ENCODE measurements at regions of chr14 and their contacts with region 1.

Region 1: DNA sequence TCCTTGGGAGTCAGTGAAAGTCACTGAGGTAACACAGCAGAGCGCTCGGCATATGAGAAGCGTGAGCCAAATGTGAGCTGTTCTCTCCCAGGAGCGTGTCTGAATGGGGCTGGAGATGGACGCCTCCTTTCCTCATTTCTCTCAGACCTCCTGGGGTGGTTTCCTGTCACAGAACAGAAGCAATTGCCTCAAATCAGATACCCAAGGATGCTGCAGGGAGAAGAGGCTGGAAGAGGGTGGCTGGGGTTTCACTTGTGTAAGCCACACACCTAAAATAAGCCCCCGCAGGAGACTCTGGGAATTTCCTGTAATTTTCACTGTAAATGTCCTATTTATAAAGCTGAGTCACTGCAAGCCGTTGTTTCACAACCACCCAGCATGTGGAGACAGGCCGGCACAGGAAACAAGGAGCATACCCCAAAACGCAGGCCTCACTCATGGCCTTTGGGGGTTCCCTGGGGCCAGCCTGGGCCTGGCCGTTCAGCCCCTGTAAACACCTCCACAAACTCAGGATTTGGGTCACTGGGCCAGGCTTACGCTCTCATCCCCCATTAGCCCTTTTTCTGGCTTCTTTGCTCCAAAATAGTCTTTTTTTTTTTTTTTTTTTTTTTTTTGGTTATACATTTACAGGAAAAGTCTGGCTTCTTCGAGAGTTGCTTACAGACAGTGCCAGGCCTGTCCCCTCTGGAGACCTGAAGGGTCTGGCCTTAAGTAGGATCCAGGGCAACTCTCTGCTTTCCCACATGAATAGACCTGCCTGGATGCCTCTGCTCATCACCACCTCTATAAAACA is 55.3 kb downstream of the VCPKMT start:
- DNase-seq: peak in 3 of 5 donors; percentile 15 to 76 (median 22)
- H3K4me3 ChIP-seq: peak overlapping the region in 1 of 2 donors; percentile 62
- H3K4me3 Mint-ChIP-seq: peak overlapping the region in 7 of 8 donors; percentile 87 to 98 (median 94)
- H3K27ac ChIP-seq: peak overlapping the region; percentile 83
- H3K27ac Mint-ChIP-seq: peak overlapping the region; percentile 92 to 100 (median 99)
- H3K4me1 ChIP-seq: peaks cover 82% of the 10 kb centered on the region
- H3K4me1 Mint-ChIP-seq: peaks cover 59 to 95% (median 78%) of the 10 kb centered on the region in 4 donors
- H3K27me3 ChIP-seq: no peaks in the 10 kb centered on the region
- H3K27me3 Mint-ChIP-seq: no peaks in the 10 kb centered on the region

Region 2: GRCh38 chr14:49585803-49586672 is 475.0 kb before region 1 on chr14 and contains the start of gene RPS29:
- CTCF ChIA-PET with region 1: no interaction called
- POLR2A ChIA-PET with region 1: no interaction called
- intact Hi-C with region 1: loop called (anchors 1 kb)
- DNase-seq: peak; percentile 98 to 99 (median 99)
- H3K4me3 ChIP-seq: peak within 1 kb of the TSS; percentile 93 to 98
- H3K4me3 Mint-ChIP-seq: peak within 1 kb of the TSS; percentile 87 to 98 (median 95)
- H3K27ac ChIP-seq: peak within 1 kb of the TSS; percentile 95
- H3K27ac Mint-ChIP-seq: peak within 1 kb of the TSS; percentile 88 to 100 (median 99)
- H3K4me1 ChIP-seq: peaks cover 38% of the 10 kb centered on the region
- H3K4me1 Mint-ChIP-seq: peaks cover 29 to 62% (median 42%) of the 10 kb centered on the region in 4 donors
- H3K27me3 ChIP-seq: no peaks in the 10 kb centered on the region
- H3K27me3 Mint-ChIP-seq: peaks cover 0 to 4% of the 10 kb centered on the region in 2 donors
- total RNA-seq, gene RPS29: 3,602 to 3,749 TPM

Region 3: GRCh38 chr14:49908432-49908781 is 152.7 kb before region 1 on chr14:
- CTCF ChIA-PET with region 1: no interaction called
- POLR2A ChIA-PET with region 1: interaction called, 11 read pairs
- intact Hi-C with region 1: no loop called
- DNase-seq: no peak
- H3K4me3 ChIP-seq: no peak overlapping the region
- H3K4me3 Mint-ChIP-seq: peak overlapping the region in 1 of 8 donors; percentile 39
- H3K27ac ChIP-seq: no peak overlapping the region
- H3K27ac Mint-ChIP-seq: peak overlapping the region in 2 of 7 donors; percentile 8 to 70
- H3K4me1 ChIP-seq: peaks cover 38% of the 10 kb centered on the region
- H3K4me1 Mint-ChIP-seq: peaks cover 18 to 42% (median 32%) of the 10 kb centered on the region in 4 donors
- H3K27me3 ChIP-seq: no peaks in the 10 kb centered on the region
- H3K27me3 Mint-ChIP-seq: no peaks in the 10 kb centered on the region

Region 4: GRCh38 chr14:49977126-49977841 is 83.8 kb before region 1 on chr14:
- CTCF ChIA-PET with region 1: interaction called, 29 read pairs
- POLR2A ChIA-PET with region 1: interaction called, 108 read pairs
- intact Hi-C with region 1: no loop called
- DNase-seq: peak; percentile 48 to 66 (median 61)
- H3K4me3 ChIP-seq: peak overlapping the region; percentile 50 to 53
- H3K4me3 Mint-ChIP-seq: peak overlapping the region; percentile 75 to 89 (median 84)
- H3K27ac ChIP-seq: peak overlapping the region; percentile 48
- H3K27ac Mint-ChIP-seq: peak overlapping the region; percentile 91 to 95 (median 93)
- H3K4me1 ChIP-seq: peaks cover 100% of the 10 kb centered on the region
- H3K4me1 Mint-ChIP-seq: peaks cover 60 to 96% (median 87%) of the 10 kb centered on the region in 4 donors
- H3K27me3 ChIP-seq: no peaks in the 10 kb centered on the region
- H3K27me3 Mint-ChIP-seq: no peaks in the 10 kb centered on the region

Region 5: DNA sequence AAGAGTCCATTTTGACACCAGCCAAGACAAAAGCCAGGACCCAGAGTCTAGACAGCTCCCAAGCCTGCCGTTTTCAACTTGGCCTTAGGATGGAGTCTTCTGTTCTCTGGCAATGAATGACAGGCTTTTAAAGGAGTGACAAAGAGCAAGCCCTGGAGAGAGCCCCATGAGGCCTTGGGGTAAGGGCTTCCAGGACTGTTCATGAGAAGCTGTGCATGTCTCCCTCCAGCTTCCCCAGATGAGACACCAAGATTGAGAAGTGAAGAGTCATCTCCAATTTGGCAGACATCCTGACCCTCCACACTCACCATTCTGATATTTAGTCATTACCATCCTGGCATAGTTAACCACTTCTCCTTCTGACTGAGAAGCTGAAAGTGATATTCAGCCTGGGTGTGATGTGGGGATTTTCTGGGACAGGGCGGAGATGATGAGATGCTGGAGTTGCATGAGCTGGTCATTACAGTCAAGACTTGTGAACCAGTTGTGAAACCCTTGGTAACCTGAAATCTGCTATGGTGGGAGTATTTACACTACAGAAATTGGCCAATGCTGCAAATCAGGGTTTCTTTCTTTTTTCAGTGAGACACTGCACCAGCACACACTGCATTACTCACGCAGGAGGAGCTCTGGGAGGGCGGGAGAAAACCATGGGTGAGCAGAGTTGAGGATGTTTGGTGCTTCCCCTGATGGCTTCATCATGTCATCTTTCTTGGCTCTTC is 22.5 kb before region 1 on chr14:
- CTCF ChIA-PET with region 1: interaction called, 45 read pairs
- POLR2A ChIA-PET with region 1: interaction called, 194 read pairs
- intact Hi-C with region 1: loop called (anchors 1 kb)
- DNase-seq: peak in 2 of 5 donors; percentile 10 to 63
- H3K4me3 ChIP-seq: no peak overlapping the region
- H3K4me3 Mint-ChIP-seq: peak overlapping the region in 7 of 8 donors; percentile 37 to 92 (median 73)
- H3K27ac ChIP-seq: peak overlapping the region; percentile 28
- H3K27ac Mint-ChIP-seq: peak overlapping the region; percentile 81 to 96 (median 93)
- H3K4me1 ChIP-seq: peaks cover 59% of the 10 kb centered on the region
- H3K4me1 Mint-ChIP-seq: peaks cover 38 to 71% (median 57%) of the 10 kb centered on the region in 4 donors
- H3K27me3 ChIP-seq: no peaks in the 10 kb centered on the region
- H3K27me3 Mint-ChIP-seq: no peaks in the 10 kb centered on the region

Region 6: GRCh38 chr14:50099335-50099734 is 38.3 kb after region 1 on chr14:
- CTCF ChIA-PET with region 1: interaction called, 51 read pairs
- POLR2A ChIA-PET with region 1: interaction called, 58 read pairs
- intact Hi-C with region 1: loop called (anchors 2 kb)
- DNase-seq: peak in 1 of 5 donors; percentile 25
- H3K4me3 ChIP-seq: no peak overlapping the region
- H3K4me3 Mint-ChIP-seq: peak overlapping the region in 5 of 8 donors; percentile 7 to 38 (median 28)
- H3K27ac ChIP-seq: no peak overlapping the region
- H3K27ac Mint-ChIP-seq: peak overlapping the region; percentile 10 to 92 (median 80)
- H3K4me1 ChIP-seq: peaks cover 69% of the 10 kb centered on the region
- H3K4me1 Mint-ChIP-seq: peaks cover 41 to 68% (median 54%) of the 10 kb centered on the region in 4 donors
- H3K27me3 ChIP-seq: no peaks in the 10 kb centered on the region
- H3K27me3 Mint-ChIP-seq: no peaks in the 10 kb centered on the region

Region 7: GRCh38 chr14:50198499-50198898 is 137.4 kb after region 1 on chr14:
- CTCF ChIA-PET with region 1: no interaction called
- POLR2A ChIA-PET with region 1: no interaction called
- intact Hi-C with region 1: no loop called
- DNase-seq: no peak
- H3K4me3 ChIP-seq: no peak overlapping the region
- H3K4me3 Mint-ChIP-seq: no peak overlapping the region
- H3K27ac ChIP-seq: no peak overlapping the region
- H3K27ac Mint-ChIP-seq: no peak overlapping the region
- H3K4me1 ChIP-seq: no peaks in the 10 kb centered on the region
- H3K4me1 Mint-ChIP-seq: no peaks in the 10 kb centered on the region
- H3K27me3 ChIP-seq: no peaks in the 10 kb centered on the region
- H3K27me3 Mint-ChIP-seq: no peaks in the 10 kb centered on the region